ENCODE measurements at regions of chr6 and their contacts with region 1.

Region 1: DNA sequence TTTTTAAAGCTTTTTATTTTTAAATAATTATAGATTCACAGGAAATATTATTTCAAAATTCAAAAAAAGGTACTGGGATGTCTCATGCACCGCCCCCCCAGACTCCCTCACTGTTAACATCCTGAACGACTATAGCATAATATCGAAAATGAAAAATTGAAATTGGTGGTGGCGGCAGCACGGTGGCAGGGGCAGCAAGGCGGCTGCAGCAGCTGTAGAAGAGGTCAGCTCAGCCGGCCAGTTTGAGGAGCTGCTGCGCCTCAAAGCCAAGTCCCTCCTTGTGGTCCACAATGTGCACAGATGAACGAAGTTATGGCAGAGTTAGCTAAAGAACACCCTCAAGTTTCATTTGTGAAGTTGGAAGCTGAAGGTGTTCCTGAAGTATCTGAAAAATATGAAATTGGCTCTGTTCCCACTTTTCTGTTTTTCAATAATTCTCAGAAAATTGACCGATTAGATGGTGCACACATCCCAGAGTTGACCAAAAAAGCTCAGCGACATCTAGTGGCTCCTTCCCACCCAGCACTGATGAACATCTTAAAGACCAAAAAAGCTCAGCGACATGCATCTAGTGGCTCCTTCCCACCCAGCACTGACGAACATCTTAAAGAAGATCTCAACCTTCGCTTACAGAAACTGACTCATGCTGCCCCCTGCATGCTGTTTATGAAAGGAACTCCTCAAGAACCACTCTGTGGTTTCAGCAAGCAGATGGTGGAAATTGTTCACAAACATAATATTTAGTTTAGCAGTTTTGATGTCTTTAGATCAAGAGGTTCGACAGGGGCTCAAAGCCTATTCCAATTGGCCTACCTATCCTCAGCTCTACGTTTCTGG is 100.8 kb downstream of the FAM217A start:
- DNase-seq: peak; percentile 51
- ATAC-seq: peak; percentile 96
- H3K4me3 ChIP-seq: no peak overlapping the region
- H3K27ac ChIP-seq: no peak overlapping the region
- H3K4me1 ChIP-seq: 0 out of 2 replicates have a peak, but pooled peaks cover 5% of the 10 kb centered on the region
- H3K27me3 ChIP-seq: peaks cover 0 to 2% of the 10 kb centered on the region in 2 experiments; a peak in 2 of 5 replicates
- CTCF ChIP-seq: peak; percentile 82
- EP300 ChIP-seq: no peak
- POLR2A ChIP-seq: no peak
- RAD21 ChIP-seq: peak; percentile 75

Region 2: DNA sequence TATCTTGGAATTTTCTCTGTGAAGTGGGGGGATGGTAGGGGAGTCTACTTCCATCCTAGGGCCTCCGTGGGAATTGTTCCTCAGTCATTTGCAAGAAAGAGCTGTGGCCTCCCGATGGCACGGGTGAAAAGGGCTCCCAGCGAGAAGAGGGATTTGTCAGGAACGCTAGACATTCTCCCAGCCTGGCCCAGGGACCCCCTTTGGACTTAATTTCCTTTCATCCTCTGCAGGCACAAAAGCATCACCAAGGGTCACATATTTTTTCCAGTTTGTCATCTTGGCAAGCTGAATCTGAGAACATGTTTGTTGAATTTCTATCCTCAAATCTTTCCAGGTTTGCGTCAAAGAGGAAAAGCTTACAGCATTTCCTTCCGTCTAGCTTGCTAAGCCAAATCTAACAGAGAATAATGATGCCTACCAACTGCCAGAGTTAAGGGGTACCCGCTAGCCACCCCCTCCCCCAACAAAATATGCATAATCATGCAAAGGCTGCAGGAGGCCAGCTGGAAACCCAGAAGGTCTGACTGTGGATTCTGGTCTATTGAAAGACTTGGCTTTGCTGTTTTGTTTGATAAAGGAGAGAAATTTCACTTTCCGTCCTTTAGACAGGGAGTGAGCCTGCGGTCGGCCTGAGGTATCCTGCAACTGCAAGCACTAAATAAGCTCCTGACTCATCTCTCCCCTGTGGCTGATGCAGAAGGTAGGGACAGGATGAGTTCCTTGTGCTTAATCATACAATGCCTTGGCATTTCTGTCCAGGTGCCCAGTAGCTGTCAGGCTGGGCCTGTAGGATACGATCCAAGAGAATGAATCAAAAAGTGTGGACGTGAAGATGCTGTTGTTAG is 696.2 kb before region 1 on chr6:
- CTCF ChIA-PET with region 1: no interaction called
- POLR2A ChIA-PET with region 1: no interaction called
- in situ Hi-C with region 1: loop called (anchors 25 kb)
- intact Hi-C with region 1: no loop called
- DNase-seq: no peak
- ATAC-seq: no peak
- H3K4me3 ChIP-seq: no peak overlapping the region
- H3K27ac ChIP-seq: no peak overlapping the region
- H3K4me1 ChIP-seq: no peaks in the 10 kb centered on the region
- H3K27me3 ChIP-seq: no peaks in the 10 kb centered on the region
- CTCF ChIP-seq: no peak
- EP300 ChIP-seq: no peak
- POLR2A ChIP-seq: 0 out of 4 replicates have a peak, but pooled peaks of 1 of the 2 experiments have one; percentile 10
- RAD21 ChIP-seq: no peak

Region 3: DNA sequence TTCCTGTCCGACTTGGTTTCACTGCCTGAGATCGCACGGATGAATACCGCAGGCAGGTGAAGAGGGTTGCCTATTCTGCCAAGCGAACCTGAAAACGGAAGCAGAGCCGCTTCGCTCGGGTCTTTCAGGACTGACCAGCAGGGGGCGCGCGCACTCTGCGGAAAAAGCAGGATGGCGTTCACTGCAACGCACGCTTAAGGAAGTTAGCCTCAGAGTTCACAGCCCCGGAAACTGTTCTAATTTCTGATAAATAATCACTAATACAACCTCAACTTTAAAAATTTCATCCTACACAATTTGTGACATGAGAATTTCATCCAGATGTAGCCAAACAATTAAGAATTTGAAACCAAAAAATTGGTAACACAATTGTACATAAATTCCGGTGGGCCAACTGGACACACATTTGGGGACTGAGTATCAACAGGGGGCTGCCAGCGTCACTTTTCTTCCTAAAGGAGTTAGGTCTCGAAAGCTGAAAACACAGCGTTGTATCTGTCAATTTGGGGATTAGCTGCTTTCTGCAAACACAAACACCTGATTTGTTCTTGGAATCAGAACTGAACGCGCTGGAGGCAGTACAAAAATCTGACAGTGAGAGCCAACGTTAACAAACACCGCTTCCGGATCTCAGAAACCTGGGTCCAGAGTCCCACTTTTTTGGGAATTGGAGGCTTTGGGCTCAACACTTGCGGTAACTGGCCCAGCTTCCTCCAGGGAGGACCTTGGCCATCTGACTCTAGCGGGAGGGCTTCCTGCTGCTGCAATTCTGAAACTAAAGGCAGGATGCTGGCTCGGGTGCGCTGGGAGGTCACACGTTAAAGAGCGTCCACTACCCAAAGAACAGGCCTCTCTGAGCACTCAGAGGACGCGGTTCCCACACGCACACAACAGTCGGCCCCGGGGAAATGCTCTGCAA is 235.4 kb before region 1 on chr6:
- CTCF ChIA-PET with region 1: interaction called, 35 read pairs
- POLR2A ChIA-PET with region 1: no interaction called
- in situ Hi-C with region 1: no loop called
- intact Hi-C with region 1: loop called (anchors 1 kb)
- DNase-seq: peak; percentile 78
- ATAC-seq: peak; percentile 85
- H3K4me3 ChIP-seq: peak overlapping the region; percentile 39 to 60 (median 51)
- H3K27ac ChIP-seq: peak overlapping the region; percentile 57
- H3K4me1 ChIP-seq: peaks cover 70% of the 10 kb centered on the region
- H3K27me3 ChIP-seq: no peaks in the 10 kb centered on the region
- CTCF ChIP-seq: peak; percentile 98
- EP300 ChIP-seq: 0 out of 4 replicates have a peak, but pooled peaks of 1 of the 2 experiments have one; percentile 32
- POLR2A ChIP-seq: no peak
- RAD21 ChIP-seq: peak; percentile 97

Region 4: DNA sequence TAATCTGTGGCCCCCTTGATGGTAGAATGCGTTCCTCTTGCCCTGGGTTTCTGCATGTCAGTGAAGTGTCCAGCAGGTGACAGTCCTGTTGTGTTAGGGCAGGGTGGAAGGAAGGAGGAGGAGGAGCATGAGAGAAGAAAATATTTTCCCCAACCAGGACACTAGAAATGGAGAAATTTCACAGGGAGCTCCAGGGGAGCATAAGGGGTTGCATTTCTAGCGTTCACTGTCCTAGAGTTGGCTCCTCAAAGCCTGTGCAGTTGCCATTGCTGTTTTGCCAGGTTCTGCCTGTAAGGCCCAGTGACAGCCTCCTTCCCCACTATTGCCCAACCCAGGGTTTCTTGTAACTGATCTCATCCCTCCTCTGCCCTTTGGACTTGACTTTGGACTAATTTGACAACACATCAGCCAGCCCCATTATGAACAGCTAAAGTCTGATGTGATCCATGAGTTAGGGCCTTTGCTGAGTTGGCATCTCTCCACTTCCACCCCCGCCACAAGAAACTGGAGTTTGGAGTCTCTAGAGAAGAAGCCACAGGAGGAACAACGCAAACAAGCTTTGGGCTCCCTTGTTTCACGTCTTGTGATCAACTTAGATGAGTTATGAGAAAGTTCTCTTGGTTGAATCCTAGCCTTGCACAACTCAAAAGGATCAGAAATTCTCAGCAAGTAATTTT is 142.9 kb before region 1 on chr6:
- CTCF ChIA-PET with region 1: no interaction called
- POLR2A ChIA-PET with region 1: no interaction called
- in situ Hi-C with region 1: no loop called
- intact Hi-C with region 1: loop called (anchors 5 kb)
- DNase-seq: peak; percentile 91
- ATAC-seq: peak; percentile 57
- H3K4me3 ChIP-seq: no peak overlapping the region
- H3K27ac ChIP-seq: peak overlapping the region; percentile 67
- H3K4me1 ChIP-seq: peaks cover 55% of the 10 kb centered on the region
- H3K27me3 ChIP-seq: no peaks in the 10 kb centered on the region
- CTCF ChIP-seq: peak; percentile 75
- EP300 ChIP-seq: peak; percentile 88 to 91
- POLR2A ChIP-seq: no peak
- RAD21 ChIP-seq: peak; percentile 85

Region 5: DNA sequence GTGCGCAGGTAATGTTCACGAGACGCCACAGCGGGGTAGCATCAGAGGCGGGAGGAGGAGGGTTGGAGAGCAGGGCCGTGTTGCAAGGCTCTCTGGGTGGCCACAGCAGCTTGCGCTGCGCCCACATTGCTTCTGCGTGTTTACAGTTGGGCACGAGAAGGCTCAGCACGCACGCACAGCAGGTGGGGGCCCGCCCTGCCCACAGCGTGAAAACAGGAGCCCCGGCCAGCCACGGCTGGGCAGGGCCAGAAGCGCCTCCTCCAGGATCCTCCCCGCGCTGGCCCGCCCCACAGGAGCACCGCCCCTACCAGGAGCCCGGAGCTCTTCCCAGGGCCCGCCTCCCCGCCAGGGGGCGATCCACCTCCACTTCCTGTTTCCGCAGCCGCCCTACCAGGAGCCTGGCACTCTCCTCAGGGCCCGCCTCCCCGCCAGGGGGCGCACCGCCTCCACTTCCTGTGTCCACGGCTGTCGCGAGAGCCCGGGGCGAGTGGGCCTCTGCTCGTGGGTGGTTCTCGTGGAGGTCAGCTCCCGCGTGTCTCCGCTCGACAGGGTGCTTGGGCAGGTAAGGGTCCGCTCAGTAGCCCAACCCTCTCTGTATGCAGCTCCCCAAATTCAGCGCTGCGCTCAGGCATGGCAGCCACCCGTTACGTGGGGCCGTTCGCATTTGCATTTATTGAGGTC is 129.0 kb before region 1 on chr6 and contains the start of gene FAM50B:
- CTCF ChIA-PET with region 1: interaction called, 18 read pairs
- POLR2A ChIA-PET with region 1: no interaction called
- in situ Hi-C with region 1: no loop called
- intact Hi-C with region 1: no loop called
- DNase-seq: no peak
- ATAC-seq: peak; percentile 87
- H3K4me3 ChIP-seq: no peak within 1 kb of the TSS
- H3K27ac ChIP-seq: no peak within 1 kb of the TSS
- H3K4me1 ChIP-seq: peaks cover 40% of the 10 kb centered on the region
- H3K27me3 ChIP-seq: no peaks in the 10 kb centered on the region
- CTCF ChIP-seq: peak; percentile 74
- EP300 ChIP-seq: no peak
- POLR2A ChIP-seq: no peak
- RAD21 ChIP-seq: peak; percentile 96
- total RNA-seq, gene FAM50B: not detected in 2 replicates

Region 6: DNA sequence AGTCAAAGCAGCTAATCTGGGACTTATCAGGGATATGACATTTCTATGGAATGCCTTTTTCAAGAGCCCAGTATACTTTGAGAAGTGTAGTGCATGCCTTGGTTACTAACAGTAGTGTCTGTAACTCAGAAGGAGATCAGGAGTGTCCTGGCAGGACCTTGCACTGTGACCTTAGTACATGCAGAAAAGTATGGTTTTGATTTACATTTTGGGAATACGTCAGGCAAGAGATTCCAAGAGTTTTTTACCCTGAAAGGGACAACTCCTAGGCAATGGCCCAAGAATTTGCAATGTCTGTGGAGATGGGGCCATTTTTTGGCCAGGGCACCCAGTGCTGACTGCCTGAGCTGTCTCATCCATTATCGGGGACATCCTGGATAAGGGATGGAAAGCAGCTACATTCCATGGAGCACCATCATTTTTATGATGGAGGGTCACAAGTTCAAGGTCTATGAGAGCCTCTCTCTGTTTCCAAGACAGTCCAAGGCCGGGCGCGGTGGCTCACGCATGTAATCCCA is 48.8 kb before region 1 on chr6:
- CTCF ChIA-PET with region 1: interaction called, 3 read pairs
- POLR2A ChIA-PET with region 1: no interaction called
- in situ Hi-C with region 1: no loop called
- intact Hi-C with region 1: loop called (anchors 1 kb)
- DNase-seq: no peak
- ATAC-seq: no peak
- H3K4me3 ChIP-seq: no peak overlapping the region
- H3K27ac ChIP-seq: no peak overlapping the region
- H3K4me1 ChIP-seq: peaks cover 16% of the 10 kb centered on the region
- H3K27me3 ChIP-seq: no peaks in the 10 kb centered on the region
- CTCF ChIP-seq: no peak
- EP300 ChIP-seq: no peak
- POLR2A ChIP-seq: no peak
- RAD21 ChIP-seq: no peak